ENCODE measurements at regions of chr2 and their contacts with region 1.

Region 1: GRCh38 chr2:102141970-102142828 is at the start of gene IL1R1:
- DNase-seq: peak; percentile 92
- ATAC-seq: peak; percentile 94
- total RNA-seq, gene IL1R1: 26.6 TPM

Region 2: DNA sequence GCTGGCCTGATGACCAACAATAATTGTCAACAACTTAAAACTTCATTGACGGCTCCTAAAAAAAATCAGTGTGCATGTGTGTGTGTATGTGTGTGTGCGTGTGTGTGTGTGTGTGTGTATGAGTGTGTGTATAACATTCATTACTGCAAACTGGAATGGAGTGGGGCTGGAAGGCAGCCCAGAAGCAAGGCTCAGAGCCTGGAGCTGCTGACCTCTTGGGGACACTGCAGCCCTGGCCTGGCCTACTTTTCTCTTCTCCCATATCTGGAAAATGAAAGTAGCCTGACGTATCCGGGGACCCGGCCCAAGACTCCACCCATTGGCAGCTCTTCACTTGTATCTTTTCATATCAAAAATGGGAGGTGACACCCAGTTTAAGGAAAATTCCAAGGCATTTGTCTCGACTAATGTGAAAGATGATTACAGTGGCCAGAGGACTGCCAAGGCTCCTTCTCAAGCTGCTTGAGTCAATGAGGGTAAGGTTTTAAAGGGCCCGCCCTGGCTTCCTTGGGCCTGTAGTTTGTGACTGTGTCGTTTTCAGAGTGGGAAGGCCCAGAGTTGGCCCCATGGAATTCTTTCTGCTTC is 72.0 kb before region 1 on chr2:
- intact Hi-C with region 1: loop called (anchors 5 kb)
- DNase-seq: peak; percentile 93
- ATAC-seq: peak; percentile 98

Region 3: DNA sequence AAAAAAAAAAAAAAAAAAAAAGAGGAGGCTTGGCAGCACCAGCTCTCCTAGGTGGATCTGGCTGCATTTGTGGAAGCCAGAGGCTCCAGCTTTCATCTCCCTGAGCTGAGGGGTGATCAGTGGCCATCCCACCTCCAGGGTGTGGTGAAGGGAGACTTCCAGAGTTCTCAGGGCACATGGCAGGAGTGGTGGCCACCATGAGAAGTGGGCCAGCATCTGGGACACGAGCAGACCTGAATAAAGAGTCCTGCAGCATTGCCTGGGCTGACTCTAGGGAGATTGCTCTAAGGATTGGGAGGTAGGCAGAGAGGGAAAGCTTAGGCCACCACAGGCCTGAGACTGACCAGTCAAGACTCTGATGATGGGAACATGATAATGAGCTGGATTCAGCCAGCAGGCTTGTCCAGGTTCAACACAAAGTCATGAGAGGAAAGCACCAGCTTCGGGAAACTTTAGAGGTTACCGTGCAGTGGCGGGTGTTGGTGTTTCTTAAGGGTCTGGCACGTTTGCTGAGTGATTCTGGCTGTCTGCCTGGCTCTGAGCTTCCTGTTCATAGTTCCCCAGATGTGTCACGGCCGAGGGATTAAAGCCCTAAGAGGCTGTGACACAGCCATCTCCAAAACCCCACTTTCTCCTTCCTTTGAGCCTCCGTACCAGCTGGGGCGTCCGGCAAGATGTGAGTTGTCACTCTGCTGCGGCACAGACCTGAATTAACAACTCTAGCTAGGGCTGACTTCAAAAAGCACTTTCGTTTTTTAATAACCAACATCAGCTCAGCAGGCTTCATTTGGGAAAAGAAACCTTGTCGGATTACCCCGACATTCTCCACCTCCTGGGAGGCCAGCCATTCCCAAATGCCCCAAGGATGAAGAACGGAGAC is 38.0 kb before region 1 on chr2:
- intact Hi-C with region 1: loop called (anchors 5 kb)
- DNase-seq: peak; percentile 74
- ATAC-seq: peak; percentile 79

Measured in Right ventricle myocardium inferior (tissue), 1 donor.